ENCODE measurements at regions of chr3 and their contacts with region 1.

Region 1: GRCh38 chr3:57852896-57853295 is 96.8 kb downstream of the SLMAP start:
- DNase-seq: no peak
- H3K4me3 ChIP-seq: no peak overlapping the region
- H3K27ac ChIP-seq: no peak overlapping the region
- H3K4me1 ChIP-seq: no peaks in the 10 kb centered on the region
- H3K27me3 ChIP-seq: no peaks in the 10 kb centered on the region
- CTCF ChIP-seq: no peak

Region 2: DNA sequence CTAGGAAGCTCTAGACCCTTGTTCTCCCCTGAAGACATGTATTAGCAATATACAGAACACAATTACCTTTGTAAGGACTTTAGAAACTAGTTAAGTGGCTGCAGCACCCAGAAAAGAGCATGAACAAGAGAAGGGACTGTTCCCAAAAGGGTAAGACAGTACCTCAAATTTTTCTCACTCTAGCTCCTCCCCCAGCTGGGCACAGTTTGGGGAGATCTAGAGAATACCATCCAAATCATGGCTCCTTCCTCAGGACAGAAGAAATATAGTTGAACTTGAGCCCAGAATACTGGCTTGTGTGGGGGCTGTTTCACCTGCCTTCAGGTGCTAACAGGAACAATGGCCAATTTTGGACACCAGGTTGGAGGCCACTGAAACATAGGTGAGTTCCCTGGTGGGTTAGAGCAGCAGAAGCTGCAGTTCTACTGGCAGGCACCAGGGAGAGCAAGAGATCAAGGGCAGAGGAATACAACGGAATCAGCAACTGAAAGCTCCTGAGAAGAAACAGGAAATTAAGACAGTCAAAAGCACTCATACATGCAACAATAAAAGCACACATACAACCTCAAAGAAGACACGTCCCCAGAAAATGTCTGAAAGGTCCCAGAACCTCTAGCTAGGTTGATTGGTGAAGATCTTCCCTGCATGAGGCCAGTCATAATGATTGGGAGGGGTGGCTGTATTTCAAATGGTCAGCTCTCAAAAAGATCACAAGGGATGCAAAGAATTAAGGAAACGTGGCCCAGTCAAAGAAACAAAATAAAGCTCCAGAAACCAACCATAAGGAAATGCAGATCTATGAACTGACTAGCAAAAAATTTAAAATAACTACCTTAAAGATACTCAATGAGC is 455.5 kb before region 1 on chr3:
- intact Hi-C with region 1: loop called (anchors 5 kb)
- DNase-seq: peak; percentile 57
- H3K4me3 ChIP-seq: no peak overlapping the region
- H3K27ac ChIP-seq: no peak overlapping the region
- H3K4me1 ChIP-seq: no peaks in the 10 kb centered on the region
- H3K27me3 ChIP-seq: no peaks in the 10 kb centered on the region
- CTCF ChIP-seq: peak; percentile 76

Region 3: DNA sequence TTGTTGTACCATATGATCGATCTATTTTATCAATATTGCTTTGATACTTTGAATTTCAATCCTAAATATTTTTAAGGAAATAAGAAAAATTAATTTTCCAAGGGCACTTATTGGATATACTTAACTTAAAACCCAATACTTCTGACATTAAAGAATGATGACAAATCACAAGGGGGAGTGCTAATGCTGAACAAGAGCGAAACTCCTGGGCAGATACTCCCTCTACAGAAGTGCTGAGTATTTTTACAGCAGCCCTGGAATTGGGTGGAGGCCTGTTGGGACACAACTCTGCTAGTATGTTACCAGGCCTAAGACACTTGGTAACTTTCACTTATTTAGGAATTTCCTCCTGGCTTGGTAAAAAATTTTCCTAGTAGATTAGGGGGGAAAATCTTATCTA is 206.2 kb before region 1 on chr3:
- intact Hi-C with region 1: loop called (anchors 10 kb)
- DNase-seq: no peak
- H3K4me3 ChIP-seq: no peak overlapping the region
- H3K27ac ChIP-seq: no peak overlapping the region
- H3K4me1 ChIP-seq: no peaks in the 10 kb centered on the region
- H3K27me3 ChIP-seq: no peaks in the 10 kb centered on the region
- CTCF ChIP-seq: no peak

Measured in colonic mucosa (tissue), 4 donors.